ENCODE measurements at regions of chr14 and their contacts with region 1.

Region 1: DNA sequence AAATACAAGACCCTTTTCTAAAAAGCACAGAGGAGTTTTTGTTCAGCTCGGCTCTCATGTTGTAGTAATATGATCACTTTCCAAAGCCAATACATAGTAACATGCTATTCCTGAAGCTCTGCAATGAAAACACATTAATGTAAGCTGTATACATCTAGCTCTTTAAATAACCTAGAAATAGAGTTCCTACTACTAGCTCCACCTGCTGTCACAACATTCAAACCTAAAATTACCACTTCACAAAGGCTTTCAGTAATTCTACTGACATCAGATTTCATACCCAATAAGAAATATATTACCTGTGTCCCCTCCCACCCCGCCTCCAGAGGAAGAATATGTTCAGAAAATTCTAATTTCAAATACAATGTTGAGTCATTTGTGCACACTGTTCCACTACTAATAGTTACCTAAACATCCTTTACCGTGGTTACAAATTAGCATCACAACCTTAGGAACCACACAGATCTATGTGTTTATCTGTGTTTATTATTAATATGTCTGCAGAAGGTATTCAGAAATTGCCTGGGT is 17.8 kb downstream of the EFCAB11 start:
- DNase-seq: no peak
- H3K4me3 ChIP-seq: no peak overlapping the region
- H3K4me3 Mint-ChIP-seq: no peak overlapping the region
- H3K27ac Mint-ChIP-seq: no peak overlapping the region
- H3K4me1 ChIP-seq: no peaks in the 10 kb centered on the region
- H3K4me1 Mint-ChIP-seq: no peaks in the 10 kb centered on the region
- H3K27me3 ChIP-seq: no peaks in the 10 kb centered on the region
- H3K27me3 Mint-ChIP-seq: no peaks in the 10 kb centered on the region
- CTCF ChIP-seq: no peak

Region 2: GRCh38 chr14:89845385-89845784 is 91.3 kb before region 1 on chr14:
- CTCF ChIA-PET with region 1: no interaction called
- POLR2A ChIA-PET with region 1: no interaction called
- intact Hi-C with region 1: no loop called
- DNase-seq: peak; percentile 40 to 56
- H3K4me3 ChIP-seq: no peak overlapping the region
- H3K4me3 Mint-ChIP-seq: peak overlapping the region; percentile 22
- H3K27ac Mint-ChIP-seq: peak overlapping the region; percentile 87
- H3K4me1 ChIP-seq: peaks cover 43% of the 10 kb centered on the region
- H3K4me1 Mint-ChIP-seq: peaks cover 7% of the 10 kb centered on the region
- H3K27me3 ChIP-seq: no peaks in the 10 kb centered on the region
- H3K27me3 Mint-ChIP-seq: no peaks in the 10 kb centered on the region
- CTCF ChIP-seq: no peak

Region 3: DNA sequence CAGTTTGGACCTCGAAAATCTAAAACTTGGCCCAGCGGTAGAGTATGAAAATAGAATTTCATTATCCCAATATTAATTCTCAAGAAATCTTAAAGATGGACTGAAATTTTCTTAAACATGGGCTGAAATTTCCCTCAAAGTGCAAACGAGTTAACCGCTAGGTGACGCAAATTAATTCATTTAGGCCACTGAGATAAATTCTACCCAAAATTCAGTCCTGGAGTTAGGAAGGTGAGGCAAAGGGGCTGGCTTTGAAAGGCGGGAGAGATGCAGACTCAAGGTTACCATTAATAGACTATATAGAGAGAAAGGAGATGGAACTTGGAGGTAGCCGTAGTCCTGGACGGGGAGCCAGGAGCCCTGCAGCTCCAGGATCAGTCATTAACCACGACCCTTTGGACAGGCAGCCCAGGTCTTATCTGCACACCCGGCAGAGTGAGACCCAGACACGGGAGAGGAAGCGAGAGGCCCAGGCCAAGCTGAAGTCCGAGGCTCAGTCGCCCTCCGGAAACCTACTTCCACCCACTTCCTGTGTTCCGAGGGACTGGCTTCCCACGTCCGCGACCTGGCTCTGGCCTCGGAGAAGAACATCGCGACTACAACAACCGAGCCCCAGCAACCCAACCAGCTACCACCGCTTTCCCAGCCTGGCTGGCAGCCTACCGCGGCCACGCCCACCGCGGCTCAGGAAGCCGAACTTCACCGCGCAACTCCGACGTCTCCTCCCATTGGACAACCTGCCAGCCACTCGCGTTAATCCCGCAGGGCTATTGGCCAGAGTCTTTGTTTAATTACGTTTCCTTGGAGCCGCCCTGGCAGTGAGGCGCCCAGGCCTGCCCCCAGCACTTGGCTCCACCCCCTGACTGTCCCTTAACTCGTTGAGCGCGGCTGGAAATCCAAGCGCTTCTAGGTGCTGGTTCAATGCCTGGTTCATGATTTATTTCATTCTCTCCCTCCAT is 17.6 kb after region 1 on chr14 and contains the start of gene EFCAB11:
- CTCF ChIA-PET with region 1: interaction called, 11 read pairs
- POLR2A ChIA-PET with region 1: no interaction called
- intact Hi-C with region 1: no loop called
- DNase-seq: peak; percentile 97 to 98
- H3K4me3 ChIP-seq: peak within 1 kb of the TSS; percentile 92
- H3K4me3 Mint-ChIP-seq: peak within 1 kb of the TSS; percentile 93
- H3K27ac Mint-ChIP-seq: peak within 1 kb of the TSS; percentile 97
- H3K4me1 ChIP-seq: no peaks in the 10 kb centered on the region
- H3K4me1 Mint-ChIP-seq: peaks cover 15% of the 10 kb centered on the region
- H3K27me3 ChIP-seq: no peaks in the 10 kb centered on the region
- H3K27me3 Mint-ChIP-seq: no peaks in the 10 kb centered on the region
- CTCF ChIP-seq: peak in 1 of 2 experiments; percentile 25
- total RNA-seq, gene EFCAB11: 33.1 and 36.2 TPM in 2 replicates

Measured in Caco-2 (cell line).